Heart right ventricle (tissue), 16 donors: ENCODE measurements at regions of chr18 and their contacts with region 1.

Region 1: DNA sequence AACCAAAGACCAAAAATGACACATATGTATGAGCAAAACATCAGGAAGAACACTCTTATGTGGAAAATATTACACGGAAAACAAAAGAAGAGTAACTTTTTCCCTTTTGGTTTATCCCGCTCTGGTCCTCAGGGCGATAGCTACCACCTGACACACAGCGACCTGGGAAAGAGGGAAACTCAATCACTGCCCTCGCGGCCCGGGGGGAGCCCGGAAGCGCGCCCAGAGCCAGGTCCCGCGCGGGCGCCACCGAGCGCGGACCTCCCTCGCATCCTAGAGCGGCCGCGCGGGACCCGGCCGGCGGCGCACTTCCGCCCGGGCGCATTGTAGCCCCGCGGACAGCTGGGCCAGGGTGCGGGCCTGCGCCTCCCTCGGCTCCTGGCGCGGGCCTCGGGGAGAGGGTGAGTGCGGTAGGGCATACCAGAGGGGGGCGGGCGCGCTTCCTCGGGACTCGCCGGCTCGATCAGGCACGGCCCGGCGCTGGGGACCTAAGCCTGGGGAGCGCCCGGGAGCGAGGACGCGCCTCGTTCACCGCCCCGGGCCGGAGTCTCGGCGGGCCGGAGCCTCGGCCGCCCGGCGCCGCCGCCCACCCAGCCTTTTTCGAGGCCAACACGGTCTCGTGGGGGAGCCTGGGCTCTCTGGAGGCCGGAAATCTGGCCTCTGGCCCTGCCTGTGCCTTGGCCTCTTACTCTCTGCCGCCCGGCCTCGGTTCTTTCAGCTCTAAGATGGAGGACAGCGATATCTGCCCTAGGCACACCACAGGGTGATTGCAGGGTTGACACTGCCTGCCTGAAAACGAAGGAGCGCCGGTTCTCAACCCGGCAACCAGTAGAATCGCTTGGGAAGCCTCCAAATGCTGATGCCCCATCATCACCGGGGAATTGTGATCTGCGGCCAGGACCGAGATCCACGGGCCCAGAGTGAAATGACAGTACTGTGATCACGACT is at the start of gene ELAC1:
- DNase-seq: peak; percentile 70 to 79
- ATAC-seq: peak; percentile 97 to 99 (median 98)
- H3K4me3 ChIP-seq: peak within 1 kb of the TSS; percentile 75 to 98 (median 94)
- H3K27ac ChIP-seq: peak within 1 kb of the TSS; percentile 89 to 100 (median 99)
- H3K4me1 ChIP-seq: peaks cover 0 to 28% (median 18%) of the 10 kb centered on the region in 9 donors
- H3K27me3 ChIP-seq: no peaks in the 10 kb centered on the region
- CTCF ChIP-seq: peak in 2 of 9 donors; percentile 15 to 28
- total RNA-seq, gene ELAC1: 3.5 to 6.5 (median 4.2) TPM

Region 2: DNA sequence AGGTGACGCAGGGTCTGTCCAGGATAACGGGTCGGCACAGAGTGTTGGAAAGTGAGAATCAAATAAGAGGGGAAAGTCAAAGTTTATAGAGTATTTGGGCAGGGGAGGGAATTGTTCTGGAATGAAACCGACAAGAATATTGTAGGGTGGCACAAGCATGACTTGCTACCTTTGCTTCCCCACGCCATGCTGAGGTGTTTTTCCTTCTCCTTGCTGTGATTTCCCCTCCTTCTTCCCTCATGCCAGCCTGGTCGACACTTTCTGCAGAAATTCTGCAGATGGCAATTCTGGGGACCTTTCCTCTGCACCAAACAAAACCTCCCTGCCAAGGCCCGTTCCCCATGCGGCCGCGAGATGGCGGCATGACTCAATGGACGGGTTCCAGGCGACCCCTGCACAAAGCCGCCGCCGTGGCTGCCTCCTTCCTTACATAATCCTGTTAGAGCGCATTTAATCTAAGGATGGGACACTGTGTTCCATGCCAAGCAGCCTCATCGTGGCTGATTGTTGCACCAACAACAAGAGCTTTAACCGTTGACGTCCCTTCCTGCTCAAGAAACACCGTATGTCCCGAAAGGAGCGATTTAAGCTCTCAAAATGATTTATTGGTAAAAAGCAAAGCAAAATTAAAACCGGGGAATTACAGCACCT is 148.1 kb before region 1 on chr18 and contains the start of gene MRO:
- intact Hi-C with region 1: loop called in 1 of 10 experiments (anchors 10 kb)
- DNase-seq: peak; percentile 78 to 85
- ATAC-seq: peak; percentile 91 to 98 (median 96)
- H3K4me3 ChIP-seq: peak within 1 kb of the TSS in 9 of 10 donors; percentile 11 to 52 (median 40)
- H3K27ac ChIP-seq: peak within 1 kb of the TSS; percentile 1 to 74 (median 43)
- H3K4me1 ChIP-seq: peaks cover 0 to 24% (median 15%) of the 10 kb centered on the region in 9 donors
- H3K27me3 ChIP-seq: no peaks in the 10 kb centered on the region
- CTCF ChIP-seq: peak; percentile 77 to 97 (median 93)
- total RNA-seq, gene MRO: 1.0 to 4.3 (median 2.3) TPM

Region 3: GRCh38 chr18:50878345-50879301 is 89.4 kb before region 1 on chr18 and contains the start of gene ME2:
- intact Hi-C with region 1: loop called in 4 of 10 experiments (anchors 2 to 10 kb)
- DNase-seq: peak; percentile 91 to 93
- ATAC-seq: peak; percentile 98 to 100 (median 99)
- H3K4me3 ChIP-seq: peak within 1 kb of the TSS; percentile 70 to 98 (median 87)
- H3K27ac ChIP-seq: peak within 1 kb of the TSS; percentile 83 to 100 (median 95)
- H3K4me1 ChIP-seq: peaks cover 0 to 38% (median 17%) of the 10 kb centered on the region in 9 donors
- H3K27me3 ChIP-seq: no peaks in the 10 kb centered on the region
- CTCF ChIP-seq: no peak
- total RNA-seq, gene ME2: 62.1 to 104 (median 75.9) TPM

Region 4: DNA sequence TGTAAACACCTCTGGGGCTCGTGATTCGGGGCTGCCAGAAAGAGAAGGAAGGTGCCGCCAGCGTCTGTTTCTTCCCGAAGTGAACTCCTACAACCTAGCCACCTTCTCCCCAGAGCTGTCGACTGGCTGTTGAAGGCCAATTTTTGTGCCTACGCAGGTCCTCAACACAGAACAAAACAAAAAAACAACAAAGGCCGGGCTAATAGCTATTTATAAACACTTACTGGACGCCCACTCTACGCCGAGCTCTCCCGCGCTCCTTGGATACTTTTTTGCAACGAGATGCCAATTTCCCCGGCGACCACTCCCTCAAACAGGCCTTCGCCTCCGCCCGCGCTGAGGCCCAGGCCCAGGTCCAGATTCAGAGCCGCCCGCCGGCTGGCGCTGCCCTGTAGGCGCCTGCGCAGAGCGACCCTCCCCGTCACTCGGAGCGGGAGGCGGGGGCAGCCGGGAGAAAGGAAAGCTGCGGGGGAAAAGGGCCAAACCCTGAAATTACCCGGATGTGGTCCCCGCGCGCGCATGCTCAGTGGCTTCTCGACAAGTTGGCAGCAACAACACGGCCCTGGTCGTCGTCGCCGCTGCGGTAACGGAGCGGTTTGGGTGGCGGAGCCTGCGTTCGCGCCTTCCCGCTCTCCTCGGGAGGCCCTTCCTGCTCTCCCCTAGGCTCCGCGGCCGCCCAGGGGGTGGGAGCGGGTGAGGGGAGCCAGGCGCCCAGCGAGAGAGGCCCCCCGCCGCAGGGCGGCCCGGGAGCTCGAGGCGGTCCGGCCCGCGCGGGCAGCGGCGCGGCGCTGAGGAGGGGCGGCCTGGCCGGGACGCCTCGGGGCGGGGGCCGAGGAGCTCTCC is 61.9 kb after region 1 on chr18 and contains the start of gene SMAD4:
- intact Hi-C with region 1: loop called in 5 of 10 experiments (anchors 5 to 10 kb)
- DNase-seq: peak; percentile 97 to 98
- ATAC-seq: peak; percentile 95 to 99 (median 97)
- H3K4me3 ChIP-seq: peak within 1 kb of the TSS; percentile 70 to 94 (median 81)
- H3K27ac ChIP-seq: peak within 1 kb of the TSS; percentile 94 to 100 (median 98)
- H3K4me1 ChIP-seq: peaks cover 2 to 85% (median 54%) of the 10 kb centered on the region in 9 donors
- H3K27me3 ChIP-seq: no peaks in the 10 kb centered on the region
- CTCF ChIP-seq: no peak
- total RNA-seq, gene SMAD4: 78.4 to 110 (median 86.9) TPM

Region 5: GRCh38 chr18:51044928-51045585 is 77.1 kb after region 1 on chr18:
- intact Hi-C with region 1: loop called in 2 of 10 experiments (anchors 5 kb)
- DNase-seq: no peak
- ATAC-seq: peak in 2 of 8 donors; percentile 37 to 56
- H3K4me3 ChIP-seq: peak overlapping the region in 2 of 10 donors; percentile 5 to 10
- H3K27ac ChIP-seq: peak overlapping the region in 3 of 10 donors; percentile 3 to 14 (median 10)
- H3K4me1 ChIP-seq: peaks cover 6 to 73% (median 58%) of the 10 kb centered on the region in 9 donors
- H3K27me3 ChIP-seq: no peaks in the 10 kb centered on the region
- CTCF ChIP-seq: no peak

Region 6: GRCh38 chr18:51051105-51051712 is 83.2 kb after region 1 on chr18:
- intact Hi-C with region 1: loop called in 2 of 10 experiments (anchors 5 kb)
- DNase-seq: no peak
- ATAC-seq: peak; percentile 67 to 84 (median 76)
- H3K4me3 ChIP-seq: no peak overlapping the region
- H3K27ac ChIP-seq: no peak overlapping the region
- H3K4me1 ChIP-seq: peaks cover 0 to 34% (median 11%) of the 10 kb centered on the region in 9 donors
- H3K27me3 ChIP-seq: no peaks in the 10 kb centered on the region
- CTCF ChIP-seq: peak; percentile 65 to 83 (median 75)

Region 7: GRCh38 chr18:51197661-51198424 is 229.9 kb after region 1 on chr18 and contains the start of gene MEX3C:
- intact Hi-C with region 1: loop called in 1 of 10 experiments (anchors 10 kb)
- DNase-seq: peak; percentile 99 to 100
- ATAC-seq: peak; percentile 93 to 98 (median 96)
- H3K4me3 ChIP-seq: peak within 1 kb of the TSS; percentile 73 to 96 (median 90)
- H3K27ac ChIP-seq: peak within 1 kb of the TSS; percentile 89 to 99 (median 96)
- H3K4me1 ChIP-seq: peaks cover 0 to 33% (median 28%) of the 10 kb centered on the region in 9 donors
- H3K27me3 ChIP-seq: no peaks in the 10 kb centered on the region
- CTCF ChIP-seq: peak in 7 of 9 donors; percentile 16 to 65 (median 50)
- total RNA-seq, gene MEX3C: 17.2 to 24.2 (median 20.1) TPM